Astrocyte of the cerebellum (primary cell): ENCODE measurements at regions of chr1 and their contacts with region 1.

Region 1: DNA sequence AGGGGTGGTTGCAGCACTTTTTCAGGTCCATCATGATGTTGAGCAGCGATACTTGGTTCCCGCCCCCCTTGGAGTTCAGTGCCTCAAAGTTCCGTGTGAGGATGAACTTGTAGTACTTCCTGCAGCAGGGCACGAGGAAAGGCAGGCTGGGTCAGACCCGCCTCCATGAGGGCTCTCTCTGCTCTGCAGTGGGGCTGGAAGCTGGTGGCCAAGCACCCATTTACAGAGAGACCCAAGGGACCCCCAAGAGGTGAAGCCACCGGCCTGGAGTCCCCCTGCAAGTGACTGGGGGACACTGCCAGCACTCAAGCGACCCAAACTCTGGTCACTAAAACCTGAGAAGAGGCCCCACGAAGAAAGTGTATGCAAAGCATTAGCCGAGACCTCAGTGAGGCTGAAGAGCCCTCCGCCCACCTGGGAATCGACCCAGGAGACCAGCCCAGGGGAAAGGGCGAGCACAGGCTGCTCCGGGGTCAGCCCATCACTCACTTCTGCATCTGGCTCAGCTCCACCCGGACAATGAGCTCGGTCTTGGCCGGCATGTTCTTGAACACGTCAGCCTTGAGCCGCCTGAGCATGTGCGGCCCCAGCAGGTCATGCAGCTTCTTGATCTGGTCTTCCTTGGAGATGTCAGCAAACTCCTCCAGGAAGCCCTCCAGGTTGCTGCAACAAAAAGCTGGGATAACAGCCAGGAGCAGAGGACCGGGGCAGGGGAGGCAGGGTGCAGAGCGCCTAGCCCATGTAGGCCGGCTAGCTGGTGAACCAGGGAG is 45.2 kb downstream of the CHD5 start:
- DNase-seq: no peak
- H3K4me3 ChIP-seq: no peak overlapping the region
- CTCF ChIP-seq: no peak

Region 2: GRCh38 chr1:6026095-6026809 is 108.7 kb before region 1 on chr1:
- in situ Hi-C with region 1: no loop called
- DNase-seq: no peak
- H3K4me3 ChIP-seq: no peak overlapping the region
- CTCF ChIP-seq: no peak

Region 3: DNA sequence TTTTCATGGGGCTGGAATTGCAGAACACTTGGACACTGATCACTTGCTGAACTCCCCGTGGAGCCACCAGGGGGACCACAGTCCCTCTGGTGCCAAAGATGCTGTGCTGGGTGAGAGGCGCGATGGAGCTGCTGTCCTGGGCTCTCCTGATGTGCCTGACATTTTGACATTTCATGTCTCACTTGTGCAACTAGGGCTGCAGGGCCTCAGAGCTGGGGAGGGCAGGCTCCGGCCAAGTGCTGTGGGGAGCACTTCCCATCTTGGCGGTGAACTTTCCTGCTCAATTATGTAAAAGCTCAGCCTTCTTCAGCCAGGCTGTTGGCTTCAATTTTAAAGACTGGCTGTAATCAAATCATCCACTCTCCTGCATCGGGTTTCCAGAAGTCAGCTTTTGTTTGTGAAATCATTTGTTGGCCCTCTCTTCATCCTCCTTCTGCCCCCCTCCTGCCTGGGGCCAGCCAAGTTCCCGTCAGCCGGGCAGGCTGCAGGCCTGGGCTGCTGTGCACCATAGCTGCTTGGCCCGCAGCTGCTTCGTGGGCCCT is 52.4 kb before region 1 on chr1:
- in situ Hi-C with region 1: no loop called
- DNase-seq: no peak
- H3K4me3 ChIP-seq: no peak overlapping the region
- CTCF ChIP-seq: peak; percentile 39

Region 4: GRCh38 chr1:6191968-6192367 is 57.0 kb after region 1 on chr1:
- in situ Hi-C with region 1: loop called (anchors 5 kb)
- DNase-seq: no peak
- H3K4me3 ChIP-seq: no peak overlapping the region
- CTCF ChIP-seq: no peak

Region 5: GRCh38 chr1:6414443-6414844 is 279.5 kb after region 1 on chr1:
- in situ Hi-C with region 1: no loop called
- DNase-seq: no peak
- H3K4me3 ChIP-seq: no peak overlapping the region
- CTCF ChIP-seq: peak; percentile 73